Sigmoid colon (tissue), 7 donors: ENCODE measurements at regions of chr14 and their contacts with region 1.

Region 1: DNA sequence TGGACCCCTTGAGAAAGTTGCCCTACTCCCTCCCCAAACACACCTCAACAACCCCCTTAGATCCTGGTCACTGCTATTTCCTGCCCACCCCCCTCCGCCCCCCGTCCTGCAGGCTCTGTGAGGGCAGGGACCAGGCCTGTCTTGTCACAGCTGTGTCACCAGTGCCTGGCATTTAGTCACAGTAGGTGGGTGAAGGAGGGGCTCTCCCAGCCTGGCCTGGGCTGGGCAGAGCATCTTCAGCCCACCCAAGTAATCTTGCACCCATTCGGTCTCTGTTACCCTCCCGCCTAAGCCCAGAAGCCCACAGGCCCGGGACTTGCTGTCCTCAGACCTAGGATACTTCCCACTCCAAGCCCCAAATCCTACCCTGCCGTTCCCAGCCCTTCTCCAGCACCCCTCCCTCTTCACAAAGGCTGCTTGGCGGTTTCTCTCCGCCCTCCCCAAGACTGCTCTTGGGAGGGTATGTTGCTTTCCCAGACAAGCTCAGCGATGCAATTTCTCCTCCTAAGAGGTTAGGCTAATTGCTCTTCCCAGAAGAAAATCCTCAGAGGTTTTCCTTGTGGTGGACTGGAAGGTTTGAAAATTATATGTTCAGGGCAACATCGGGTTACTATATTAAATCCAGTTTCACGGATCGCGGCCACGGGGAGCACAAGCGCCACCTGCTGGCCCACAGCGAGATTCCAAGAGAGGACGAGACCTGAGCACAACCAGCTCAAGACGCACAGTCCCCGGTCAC is 50.8 kb upstream of the ZFP36L1 start:
- DNase-seq: peak; percentile 93
- H3K4me3 ChIP-seq: peak overlapping the region in 3 of 4 donors; percentile 31 to 37 (median 31)
- H3K27ac ChIP-seq: peak overlapping the region in 3 of 4 donors; percentile 80 to 82 (median 82)
- H3K4me1 ChIP-seq: peaks cover 0 to 41% (median 35%) of the 10 kb centered on the region in 4 donors
- H3K27me3 ChIP-seq: no peaks in the 10 kb centered on the region
- CTCF ChIP-seq: peak; percentile 64 to 94 (median 80)
- EP300 ChIP-seq: no peak
- POLR2A ChIP-seq: no peak

Region 2: GRCh38 chr14:67883717-67884116 is 959.9 kb before region 1 on chr14:
- intact Hi-C with region 1: loop called (anchors 5 kb)
- DNase-seq: no peak
- H3K4me3 ChIP-seq: no peak overlapping the region
- H3K27ac ChIP-seq: no peak overlapping the region
- H3K4me1 ChIP-seq: peaks cover 0 to 7% (median 3%) of the 10 kb centered on the region in 4 donors
- H3K27me3 ChIP-seq: no peaks in the 10 kb centered on the region
- CTCF ChIP-seq: peak in 1 of 4 experiments; percentile 10
- EP300 ChIP-seq: no peak
- POLR2A ChIP-seq: no peak

Region 3: GRCh38 chr14:67934008-67934481 is 909.6 kb before region 1 on chr14:
- intact Hi-C with region 1: loop called (anchors 5 kb)
- DNase-seq: no peak
- H3K4me3 ChIP-seq: no peak overlapping the region
- H3K27ac ChIP-seq: peak overlapping the region; percentile 44 to 79 (median 66)
- H3K4me1 ChIP-seq: peaks cover 0 to 32% (median 17%) of the 10 kb centered on the region in 4 donors
- H3K27me3 ChIP-seq: no peaks in the 10 kb centered on the region
- CTCF ChIP-seq: peak; percentile 71 to 90 (median 86)
- EP300 ChIP-seq: no peak
- POLR2A ChIP-seq: no peak